Mucosa of descending colon (tissue), 3 donors: ENCODE measurements at regions of chr2 and their contacts with region 1.

Region 1: GRCh38 chr2:46062637-46063412 is 234.4 kb upstream of the EPAS1 start:
- DNase-seq: peak in 2 of 3 donors; percentile 39 to 88
- ATAC-seq: peak; percentile 73
- H3K4me3 ChIP-seq: no peak overlapping the region
- H3K4me1 ChIP-seq: no peaks in the 10 kb centered on the region
- CTCF ChIP-seq: peak; percentile 84

Region 2: DNA sequence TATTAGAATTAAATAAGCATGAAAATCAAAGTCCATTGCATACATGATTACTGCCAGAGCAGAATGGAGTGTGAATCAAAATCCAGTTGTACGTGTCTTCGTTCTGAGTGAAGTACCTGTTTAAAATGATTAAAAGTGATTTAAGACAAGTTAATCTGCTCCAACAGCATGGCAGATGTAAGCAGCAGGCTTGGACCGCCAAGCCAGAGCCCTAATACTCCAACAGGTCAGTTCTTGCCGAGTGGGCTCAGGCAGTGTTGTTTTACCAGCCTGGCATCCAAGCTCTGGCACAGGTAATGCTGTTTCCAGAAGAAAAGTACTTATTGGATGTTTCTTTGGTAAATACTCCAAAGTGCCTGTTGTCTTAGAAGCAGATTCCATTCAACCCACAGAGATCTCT is 63.0 kb after region 1 on chr2:
- intact Hi-C with region 1: loop called in 1 of 2 experiments (anchors 5 kb)
- DNase-seq: no peak
- ATAC-seq: no peak
- H3K4me3 ChIP-seq: no peak overlapping the region
- H3K4me1 ChIP-seq: peaks cover 14% of the 10 kb centered on the region
- CTCF ChIP-seq: no peak

Region 3: GRCh38 chr2:46275973-46276372 is 213.1 kb after region 1 on chr2:
- intact Hi-C with region 1: no loop called
- DNase-seq: peak; percentile 31 to 57 (median 51)
- ATAC-seq: peak; percentile 29
- H3K4me3 ChIP-seq: no peak overlapping the region
- H3K4me1 ChIP-seq: no peaks in the 10 kb centered on the region
- CTCF ChIP-seq: no peak

Region 4: GRCh38 chr2:46351750-46352138 is 288.9 kb after region 1 on chr2:
- intact Hi-C with region 1: loop called in 1 of 2 experiments (anchors 10 kb)
- DNase-seq: peak; percentile 60 to 80 (median 62)
- ATAC-seq: peak; percentile 77
- H3K4me3 ChIP-seq: no peak overlapping the region
- H3K4me1 ChIP-seq: no peaks in the 10 kb centered on the region
- CTCF ChIP-seq: no peak

Region 5: DNA sequence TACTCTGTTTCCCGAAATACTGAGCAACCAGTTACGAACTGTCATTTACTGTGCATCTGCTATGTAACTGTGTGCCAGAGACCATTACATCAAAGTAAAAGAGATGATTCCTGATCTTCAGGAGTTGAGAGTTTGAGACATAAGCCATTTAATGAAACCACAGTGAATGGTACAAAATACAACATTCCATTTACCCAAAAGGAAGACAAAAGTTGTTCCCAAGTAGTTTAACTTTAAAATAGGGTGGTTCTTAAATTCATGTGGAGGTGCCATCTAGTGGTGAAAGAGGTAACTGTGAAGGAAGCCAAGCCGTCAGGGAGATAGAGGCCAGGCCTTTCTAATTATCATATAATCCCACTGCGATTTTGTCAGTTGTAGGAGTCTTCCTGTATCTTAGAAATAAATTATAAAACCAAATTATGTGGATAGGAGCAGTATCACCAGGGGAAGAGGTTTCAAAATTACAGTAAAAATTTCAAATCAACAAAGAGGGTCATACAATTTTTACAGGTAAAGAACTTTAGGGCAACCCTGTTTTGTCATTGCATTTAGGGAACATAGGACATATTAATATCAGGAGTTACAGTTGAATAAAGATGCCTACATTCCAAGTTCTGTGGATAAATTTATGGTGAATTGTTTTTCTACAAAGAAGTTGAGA is 302.1 kb after region 1 on chr2:
- intact Hi-C with region 1: loop called in 1 of 2 experiments (anchors 10 kb)
- DNase-seq: peak in 1 of 3 donors; percentile 78
- ATAC-seq: peak; percentile 71
- H3K4me3 ChIP-seq: no peak overlapping the region
- H3K4me1 ChIP-seq: no peaks in the 10 kb centered on the region
- CTCF ChIP-seq: peak; percentile 48